Panc1 (cell line): ENCODE measurements at regions of chr13 and their contacts with region 1.

Region 1: GRCh38 chr13:96141027-96141426 is 51.1 kb downstream of the HS6ST3 start:
- DNase-seq: peak; percentile 4
- ATAC-seq: no peak
- H3K4me3 ChIP-seq: no peak overlapping the region
- H3K27ac ChIP-seq: no peak overlapping the region
- H3K4me1 ChIP-seq: no peaks in the 10 kb centered on the region
- H3K27me3 ChIP-seq: no peaks in the 10 kb centered on the region
- CTCF ChIP-seq: peak; percentile 33; the same call in 1 of the 2 replicates

Region 2: DNA sequence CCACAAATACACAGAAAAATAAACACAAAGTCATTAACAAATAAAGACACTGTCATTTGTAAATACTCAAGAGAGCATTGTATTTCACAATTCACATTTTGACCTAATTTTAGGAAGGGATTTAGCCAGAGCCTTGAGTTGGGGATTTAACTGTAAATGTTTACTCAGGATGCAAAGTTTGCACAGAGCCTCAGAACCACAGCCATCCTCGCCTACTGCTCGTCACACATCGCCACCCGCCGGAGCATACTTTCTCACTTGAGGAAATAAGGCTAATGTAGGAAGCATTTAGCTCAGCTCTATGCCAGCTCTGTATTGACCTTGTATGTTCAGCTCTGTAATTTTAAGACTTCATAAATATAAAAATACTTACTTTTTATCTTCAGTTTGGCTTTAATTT is 410.5 kb after region 1 on chr13:
- CTCF ChIA-PET with region 1: interaction called, 11 read pairs
- POLR2A ChIA-PET with region 1: no interaction called
- in situ Hi-C with region 1: no loop called
- intact Hi-C with region 1: no loop called
- DNase-seq: no peak
- ATAC-seq: no peak
- H3K4me3 ChIP-seq: no peak overlapping the region
- H3K27ac ChIP-seq: no peak overlapping the region
- H3K4me1 ChIP-seq: no peaks in the 10 kb centered on the region
- H3K27me3 ChIP-seq: no peaks in the 10 kb centered on the region
- CTCF ChIP-seq: no peak

Region 3: GRCh38 chr13:96817336-96817941 is 676.4 kb after region 1 on chr13:
- CTCF ChIA-PET with region 1: no interaction called
- POLR2A ChIA-PET with region 1: no interaction called
- in situ Hi-C with region 1: no loop called
- intact Hi-C with region 1: loop called (anchors 10 kb)
- DNase-seq: no peak
- ATAC-seq: no peak
- H3K4me3 ChIP-seq: no peak overlapping the region
- H3K27ac ChIP-seq: no peak overlapping the region
- H3K4me1 ChIP-seq: no peaks in the 10 kb centered on the region
- H3K27me3 ChIP-seq: no peaks in the 10 kb centered on the region
- CTCF ChIP-seq: peak; percentile 57; the same call in 1 of the 2 replicates